ENCODE measurements at regions of chr1 and their contacts with region 1.

Region 1: GRCh38 chr1:61641578-61642336 is 83.2 kb downstream of the TM2D1 start:
- DNase-seq: peak; percentile 78 to 79
- ATAC-seq: peak; percentile 82 to 91 (median 88)
- H3K4me3 ChIP-seq: peak overlapping the region in 6 of 10 donors; percentile 28 to 49 (median 31)
- H3K27ac ChIP-seq: peak overlapping the region in 9 of 10 donors; percentile 39 to 90 (median 77)
- H3K4me1 ChIP-seq: peaks cover 0 to 32% (median 25%) of the 10 kb centered on the region in 9 donors
- H3K27me3 ChIP-seq: no peaks in the 10 kb centered on the region
- CTCF ChIP-seq: peak; percentile 52 to 92 (median 84)

Region 2: DNA sequence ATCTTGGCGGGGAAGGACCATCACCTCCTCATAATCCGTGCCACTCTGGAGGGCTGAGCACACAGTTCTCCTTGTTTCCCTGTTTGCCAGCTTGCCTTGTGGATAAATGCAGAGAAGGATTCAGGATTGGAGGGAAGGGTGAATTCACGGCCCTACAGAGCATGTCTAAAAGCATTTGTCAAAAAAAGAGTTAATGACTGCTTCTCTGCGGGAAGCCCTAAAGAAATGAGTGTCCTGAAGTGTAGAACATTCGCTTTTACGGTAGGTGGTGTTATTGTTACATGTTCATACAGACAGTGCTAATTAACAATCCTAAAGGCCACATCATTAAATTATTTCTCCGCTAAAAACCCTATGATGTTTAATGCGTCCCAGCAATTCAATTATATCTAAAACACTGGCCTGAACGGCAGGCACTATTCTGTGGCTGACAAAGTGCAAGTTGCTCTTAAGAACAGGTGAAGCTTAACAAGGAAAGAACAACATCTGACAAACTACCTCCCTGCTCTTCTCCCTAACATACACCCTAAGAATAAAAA is 671.7 kb before region 1 on chr1:
- intact Hi-C with region 1: loop called in 5 of 10 experiments (anchors 2 to 10 kb)
- DNase-seq: no peak
- ATAC-seq: peak; percentile 52 to 83 (median 75)
- H3K4me3 ChIP-seq: peak overlapping the region in 1 of 10 donors; percentile 10
- H3K27ac ChIP-seq: peak overlapping the region in 7 of 10 donors; percentile 41 to 76 (median 66)
- H3K4me1 ChIP-seq: peaks cover 0 to 14% (median 8%) of the 10 kb centered on the region in 9 donors
- H3K27me3 ChIP-seq: no peaks in the 10 kb centered on the region
- CTCF ChIP-seq: peak; percentile 17 to 70 (median 60)

Region 3: GRCh38 chr1:60984062-60984799 is 657.5 kb before region 1 on chr1:
- intact Hi-C with region 1: loop called in 4 of 10 experiments (anchors 5 to 10 kb)
- DNase-seq: peak; percentile 37 to 71
- ATAC-seq: peak; percentile 80 to 88 (median 84)
- H3K4me3 ChIP-seq: no peak overlapping the region
- H3K27ac ChIP-seq: peak overlapping the region; percentile 58 to 84 (median 76)
- H3K4me1 ChIP-seq: peaks cover under 1 to 38% (median 15%) of the 10 kb centered on the region in 9 donors
- H3K27me3 ChIP-seq: no peaks in the 10 kb centered on the region
- CTCF ChIP-seq: no peak

Region 4: GRCh38 chr1:61463220-61463619 is 178.5 kb before region 1 on chr1:
- intact Hi-C with region 1: loop called in 2 of 10 experiments (anchors 5 to 10 kb)
- DNase-seq: no peak
- ATAC-seq: no peak
- H3K4me3 ChIP-seq: no peak overlapping the region
- H3K27ac ChIP-seq: no peak overlapping the region
- H3K4me1 ChIP-seq: no peaks in the 10 kb centered on the region
- H3K27me3 ChIP-seq: no peaks in the 10 kb centered on the region
- CTCF ChIP-seq: no peak

Region 5: GRCh38 chr1:61552630-61553305 is 89.0 kb before region 1 on chr1:
- intact Hi-C with region 1: no loop called
- DNase-seq: no peak
- ATAC-seq: no peak
- H3K4me3 ChIP-seq: no peak overlapping the region
- H3K27ac ChIP-seq: no peak overlapping the region
- H3K4me1 ChIP-seq: no peaks in the 10 kb centered on the region
- H3K27me3 ChIP-seq: no peaks in the 10 kb centered on the region
- CTCF ChIP-seq: no peak

Region 6: GRCh38 chr1:61606448-61607312 is 35.1 kb before region 1 on chr1:
- intact Hi-C with region 1: loop called in 1 of 10 experiments (anchors 1 kb)
- DNase-seq: peak; percentile 66 to 68
- ATAC-seq: peak; percentile 86 to 95 (median 92)
- H3K4me3 ChIP-seq: no peak overlapping the region
- H3K27ac ChIP-seq: peak overlapping the region in 9 of 10 donors; percentile 33 to 87 (median 78)
- H3K4me1 ChIP-seq: peaks cover 0 to 22% (median 4%) of the 10 kb centered on the region in 9 donors
- H3K27me3 ChIP-seq: no peaks in the 10 kb centered on the region
- CTCF ChIP-seq: no peak